ENCODE measurements at regions of chr15 and their contacts with region 1.

Region 1: GRCh38 chr15:89740137-89740536 is 10.9 kb downstream of the MESP1 start:
- DNase-seq: peak in 4 of 5 donors; percentile 42 to 60 (median 60)
- H3K4me3 ChIP-seq: no peak overlapping the region
- H3K4me3 Mint-ChIP-seq: peak overlapping the region in 3 of 7 donors; percentile 43 to 62 (median 58)
- H3K27ac ChIP-seq: no peak overlapping the region
- H3K27ac Mint-ChIP-seq: no peak overlapping the region
- H3K4me1 ChIP-seq: no peaks in the 10 kb centered on the region
- H3K4me1 Mint-ChIP-seq: peaks cover 2 to 4% (median 3%) of the 10 kb centered on the region in 3 donors
- H3K27me3 ChIP-seq: no peaks in the 10 kb centered on the region
- H3K27me3 Mint-ChIP-seq: peaks cover 10 to 25% of the 10 kb centered on the region in 2 donors

Region 2: DNA sequence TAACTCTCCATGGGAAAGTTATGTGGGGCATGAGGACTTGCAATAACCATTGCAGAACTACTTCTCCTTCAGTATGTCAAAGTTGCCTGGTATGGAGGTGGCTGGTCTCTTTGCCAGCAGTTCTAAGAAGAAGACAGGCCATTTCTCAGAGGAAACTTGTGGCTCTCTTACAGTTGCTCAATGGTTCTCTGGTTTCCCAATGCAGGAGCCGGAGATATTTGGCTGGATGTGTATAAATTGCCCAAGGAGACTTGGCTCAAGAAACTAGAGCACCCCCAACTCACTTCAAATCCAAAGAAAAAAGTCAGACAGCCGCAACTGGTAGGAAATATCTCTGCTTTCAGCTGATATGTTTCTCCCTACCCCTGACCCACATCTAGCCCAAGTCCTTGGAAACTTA is 25.4 kb before region 1 on chr15:
- CTCF ChIA-PET with region 1: no interaction called
- POLR2A ChIA-PET with region 1: no interaction called
- DNase-seq: no peak
- H3K4me3 ChIP-seq: no peak overlapping the region
- H3K4me3 Mint-ChIP-seq: no peak overlapping the region
- H3K27ac ChIP-seq: no peak overlapping the region
- H3K27ac Mint-ChIP-seq: no peak overlapping the region
- H3K4me1 ChIP-seq: no peaks in the 10 kb centered on the region
- H3K4me1 Mint-ChIP-seq: no peaks in the 10 kb centered on the region
- H3K27me3 ChIP-seq: no peaks in the 10 kb centered on the region
- H3K27me3 Mint-ChIP-seq: peaks cover 2 to 10% of the 10 kb centered on the region in 2 donors

Region 3: DNA sequence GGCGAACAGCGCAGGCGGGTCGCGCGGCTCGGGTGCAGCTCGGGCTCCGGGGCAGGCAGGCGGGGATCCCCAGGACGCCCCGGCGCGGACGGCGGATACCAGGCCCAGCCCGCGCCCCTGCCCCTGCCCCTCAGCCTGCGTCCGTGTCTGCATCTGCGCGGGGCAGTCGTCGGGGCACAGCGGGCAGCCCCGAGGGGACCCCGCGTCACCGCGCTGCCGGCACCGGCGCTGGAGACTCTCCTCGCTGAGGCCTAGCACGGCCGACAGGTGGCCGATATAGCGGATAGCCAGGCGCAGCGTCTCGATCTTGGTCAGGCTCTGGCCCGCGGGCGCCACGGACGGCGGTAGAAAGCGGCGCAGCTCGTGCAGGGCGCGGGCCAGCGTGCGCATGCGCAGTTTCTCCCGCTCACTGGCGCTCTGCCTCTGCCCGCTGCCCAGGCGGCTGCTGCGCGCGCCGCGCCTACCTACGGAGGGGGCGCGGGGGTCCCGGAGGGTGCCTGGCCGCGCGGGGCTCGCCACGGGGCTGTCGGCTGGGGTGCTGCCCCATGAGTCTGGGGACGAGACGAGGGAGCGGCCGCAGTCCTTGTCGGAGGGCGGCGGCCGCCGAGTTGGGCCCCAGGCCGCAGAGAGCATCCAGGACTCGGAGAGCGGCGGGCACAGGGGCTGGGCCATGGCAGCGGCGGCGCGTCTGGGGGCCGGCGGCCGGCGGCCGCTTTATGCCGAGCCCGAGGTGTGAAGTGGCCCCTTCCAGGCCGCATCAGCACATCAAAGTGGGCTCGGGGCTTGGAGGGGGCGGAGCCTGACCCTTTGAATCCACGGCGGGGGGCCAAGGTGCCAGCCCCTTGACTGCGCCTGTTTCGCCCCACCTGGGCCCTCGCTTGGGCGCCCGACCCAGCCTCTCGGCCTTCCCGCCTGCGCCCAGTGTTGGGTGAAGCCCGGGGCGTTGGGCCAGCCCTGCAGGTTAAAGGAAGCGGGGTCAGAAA is 10.7 kb after region 1 on chr15 and contains the start of gene MESP1:
- CTCF ChIA-PET with region 1: interaction called, 17 read pairs
- POLR2A ChIA-PET with region 1: no interaction called
- DNase-seq: peak; percentile 78 to 90 (median 81)
- H3K4me3 ChIP-seq: peak within 1 kb of the TSS; percentile 39
- H3K4me3 Mint-ChIP-seq: peak within 1 kb of the TSS; percentile 71 to 88 (median 76)
- H3K27ac ChIP-seq: no peak within 1 kb of the TSS
- H3K27ac Mint-ChIP-seq: peak within 1 kb of the TSS in 3 of 8 donors; percentile 19 to 54 (median 33)
- H3K4me1 ChIP-seq: peaks cover 5% of the 10 kb centered on the region
- H3K4me1 Mint-ChIP-seq: peaks cover 0 to 8% (median 7%) of the 10 kb centered on the region in 3 donors
- H3K27me3 ChIP-seq: no peaks in the 10 kb centered on the region
- H3K27me3 Mint-ChIP-seq: peaks cover 1 to 7% of the 10 kb centered on the region in 2 donors
- total RNA-seq, gene MESP1: 5.3 to 5.6 TPM